Endothelial cell of umbilical vein (primary cell): ENCODE measurements at regions of chr17 and their contacts with region 1.

Region 1: DNA sequence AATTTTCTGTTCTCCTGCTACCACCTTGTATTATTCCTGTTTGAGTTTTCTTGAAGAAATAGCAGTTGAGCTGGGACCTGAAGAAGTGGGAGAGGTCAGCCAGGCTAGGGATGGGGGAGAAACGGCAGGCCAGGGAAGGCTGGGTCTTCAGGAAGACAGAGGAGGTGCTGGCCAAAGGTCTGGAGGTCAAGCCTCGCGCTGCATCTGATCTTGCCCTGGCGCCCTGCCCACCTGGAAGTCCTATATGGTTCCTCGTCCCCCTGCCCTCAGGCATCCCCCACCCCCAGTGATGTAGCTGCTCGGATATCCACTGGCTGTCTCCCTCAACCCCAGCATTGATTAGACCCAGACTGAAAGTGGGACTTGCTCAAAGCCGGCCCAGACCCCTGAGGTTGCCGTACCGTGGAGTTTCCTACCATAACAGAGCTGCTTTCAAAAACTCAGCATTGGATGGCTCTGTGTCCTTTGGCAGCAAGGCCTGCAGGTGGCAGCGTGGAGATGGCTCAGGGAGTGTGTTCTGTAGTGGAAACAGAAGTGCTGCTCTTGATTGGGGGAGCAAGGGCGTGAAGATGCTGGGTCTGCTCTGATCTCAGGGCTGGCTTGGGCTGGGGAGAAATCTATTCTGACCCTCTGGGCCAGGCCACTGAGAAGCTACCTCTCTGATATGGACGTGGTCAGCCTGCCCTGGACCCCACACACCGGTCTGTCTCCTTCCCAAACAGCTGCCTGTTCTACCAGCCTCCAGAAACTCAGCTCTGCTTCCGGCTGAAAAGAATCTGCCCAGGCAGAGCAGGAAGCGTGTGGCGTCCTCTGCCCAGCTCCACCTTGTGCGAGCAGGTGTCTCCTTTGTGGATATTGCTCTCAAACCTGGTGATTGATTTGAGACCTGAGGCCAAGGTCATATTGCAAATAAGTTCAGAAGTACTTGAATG is 107.0 kb upstream of the CACNG5 start:
- DNase-seq: peak; percentile 61
- H3K4me3 ChIP-seq: no peak overlapping the region
- H3K27ac ChIP-seq: no peak overlapping the region
- H3K4me1 ChIP-seq: no peaks in the 10 kb centered on the region
- H3K27me3 ChIP-seq: no peaks in the 10 kb centered on the region
- CTCF ChIP-seq: peak; percentile 65 to 79
- POLR2A ChIP-seq: no peak

Region 2: GRCh38 chr17:66715745-66716156 is 12.2 kb before region 1 on chr17:
- CTCF ChIA-PET with region 1: interaction called, 29 read pairs
- POLR2A ChIA-PET with region 1: no interaction called
- dilution Hi-C with region 1: no loop called
- intact Hi-C with region 1: no loop called
- DNase-seq: peak; percentile 70
- H3K4me3 ChIP-seq: no peak overlapping the region
- H3K27ac ChIP-seq: no peak overlapping the region
- H3K4me1 ChIP-seq: no peaks in the 10 kb centered on the region
- H3K27me3 ChIP-seq: no peaks in the 10 kb centered on the region
- CTCF ChIP-seq: peak; percentile 58 to 69
- POLR2A ChIP-seq: no peak

Region 3: DNA sequence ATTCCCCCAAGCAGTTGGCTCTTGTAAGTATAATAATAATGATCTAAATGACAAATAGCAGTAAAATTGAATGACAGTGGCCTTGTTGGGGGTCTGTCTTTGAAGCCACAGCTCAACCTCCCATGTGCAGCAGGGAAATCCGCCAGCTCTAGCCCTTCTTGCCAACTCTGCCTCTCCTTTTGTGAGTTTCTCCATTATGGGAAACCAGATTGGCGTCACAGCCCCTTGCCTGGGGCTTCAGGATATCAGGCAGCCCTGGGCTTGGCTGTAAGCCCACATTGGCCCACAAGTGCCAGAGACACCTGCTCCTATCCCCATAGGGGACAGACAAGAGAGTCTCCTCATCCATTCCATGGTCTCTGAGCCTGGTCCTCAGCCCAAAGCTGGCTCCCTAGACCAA is 36.7 kb after region 1 on chr17:
- CTCF ChIA-PET with region 1: no interaction called
- POLR2A ChIA-PET with region 1: no interaction called
- dilution Hi-C with region 1: no loop called
- intact Hi-C with region 1: no loop called
- DNase-seq: no peak
- H3K4me3 ChIP-seq: no peak overlapping the region
- H3K27ac ChIP-seq: no peak overlapping the region
- H3K4me1 ChIP-seq: no peaks in the 10 kb centered on the region
- H3K27me3 ChIP-seq: no peaks in the 10 kb centered on the region
- CTCF ChIP-seq: no peak
- POLR2A ChIP-seq: no peak

Region 4: GRCh38 chr17:66799849-66800537 is 72.1 kb after region 1 on chr17:
- CTCF ChIA-PET with region 1: no interaction called
- POLR2A ChIA-PET with region 1: no interaction called
- dilution Hi-C with region 1: no loop called
- intact Hi-C with region 1: no loop called
- DNase-seq: peak; percentile 3
- H3K4me3 ChIP-seq: no peak overlapping the region
- H3K27ac ChIP-seq: no peak overlapping the region
- H3K4me1 ChIP-seq: no peaks in the 10 kb centered on the region
- H3K27me3 ChIP-seq: no peaks in the 10 kb centered on the region
- CTCF ChIP-seq: no peak
- POLR2A ChIP-seq: no peak

Region 5: GRCh38 chr17:66900126-66901010 is 172.5 kb after region 1 on chr17:
- CTCF ChIA-PET with region 1: interaction called, 27 read pairs
- POLR2A ChIA-PET with region 1: no interaction called
- dilution Hi-C with region 1: no loop called
- intact Hi-C with region 1: no loop called
- DNase-seq: peak; percentile 6
- H3K4me3 ChIP-seq: no peak overlapping the region
- H3K27ac ChIP-seq: no peak overlapping the region
- H3K4me1 ChIP-seq: peaks cover 6% of the 10 kb centered on the region
- H3K27me3 ChIP-seq: peaks cover 2 to 3% of the 10 kb centered on the region in 2 experiments
- CTCF ChIP-seq: no peak
- POLR2A ChIP-seq: no peak